HepG2 (cell line): ENCODE measurements at regions of chr5 and their contacts with region 1.

Region 1: GRCh38 chr5:143182901-143183820 is 220.3 kb downstream of the NR3C1 start:
- DNase-seq: peak; percentile 66
- ATAC-seq: peak; percentile 95
- H3K4me3 ChIP-seq: peak overlapping the region in 1 of 3 experiments; percentile 8; a peak in 1 of 6 replicates
- H3K27ac ChIP-seq: peak overlapping the region; percentile 58
- H3K4me1 ChIP-seq: peaks cover 40% of the 10 kb centered on the region
- H3K27me3 ChIP-seq: no peaks in the 10 kb centered on the region
- CTCF ChIP-seq: peak; percentile 35
- EP300 ChIP-seq: no peak
- POLR2A ChIP-seq: no peak
- RAD21 ChIP-seq: no peak

Region 2: DNA sequence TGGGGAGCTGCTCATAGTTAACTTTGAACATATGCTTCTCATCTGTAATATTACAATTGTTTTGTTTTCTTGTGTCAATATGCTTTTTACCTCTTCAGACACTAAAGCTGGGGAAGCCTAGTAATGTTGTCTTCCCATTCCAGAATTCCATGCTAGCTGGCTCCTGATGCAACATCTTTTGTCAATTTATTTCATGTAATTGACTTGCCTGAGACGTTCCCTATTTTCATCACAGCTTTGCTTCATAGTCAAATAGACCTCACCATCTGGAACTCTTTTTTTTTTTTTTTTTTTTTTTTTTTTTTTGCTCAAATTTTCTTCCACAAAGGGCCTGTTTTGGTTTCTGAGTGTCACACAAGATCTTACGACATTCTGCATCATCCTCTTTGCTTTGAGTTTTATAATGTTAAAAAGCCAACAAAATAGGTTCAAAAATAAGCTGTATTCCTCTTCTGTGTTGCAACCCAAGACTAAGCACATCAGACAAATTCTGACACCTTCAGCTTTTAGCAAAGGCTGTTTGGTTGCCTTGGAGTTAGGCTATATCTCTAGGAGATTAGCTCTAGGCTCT is 14.9 kb before region 1 on chr5:
- CTCF ChIA-PET with region 1: no interaction called
- POLR2A ChIA-PET with region 1: no interaction called
- in situ Hi-C with region 1: no loop called
- intact Hi-C with region 1: loop called (anchors 2 kb)
- DNase-seq: no peak
- ATAC-seq: no peak
- H3K4me3 ChIP-seq: no peak overlapping the region
- H3K27ac ChIP-seq: no peak overlapping the region
- H3K4me1 ChIP-seq: peaks cover 51% of the 10 kb centered on the region
- H3K27me3 ChIP-seq: no peaks in the 10 kb centered on the region
- CTCF ChIP-seq: no peak
- EP300 ChIP-seq: no peak
- POLR2A ChIP-seq: no peak
- RAD21 ChIP-seq: no peak